ENCODE measurements at regions of chr1 and their contacts with region 1.

Region 1: DNA sequence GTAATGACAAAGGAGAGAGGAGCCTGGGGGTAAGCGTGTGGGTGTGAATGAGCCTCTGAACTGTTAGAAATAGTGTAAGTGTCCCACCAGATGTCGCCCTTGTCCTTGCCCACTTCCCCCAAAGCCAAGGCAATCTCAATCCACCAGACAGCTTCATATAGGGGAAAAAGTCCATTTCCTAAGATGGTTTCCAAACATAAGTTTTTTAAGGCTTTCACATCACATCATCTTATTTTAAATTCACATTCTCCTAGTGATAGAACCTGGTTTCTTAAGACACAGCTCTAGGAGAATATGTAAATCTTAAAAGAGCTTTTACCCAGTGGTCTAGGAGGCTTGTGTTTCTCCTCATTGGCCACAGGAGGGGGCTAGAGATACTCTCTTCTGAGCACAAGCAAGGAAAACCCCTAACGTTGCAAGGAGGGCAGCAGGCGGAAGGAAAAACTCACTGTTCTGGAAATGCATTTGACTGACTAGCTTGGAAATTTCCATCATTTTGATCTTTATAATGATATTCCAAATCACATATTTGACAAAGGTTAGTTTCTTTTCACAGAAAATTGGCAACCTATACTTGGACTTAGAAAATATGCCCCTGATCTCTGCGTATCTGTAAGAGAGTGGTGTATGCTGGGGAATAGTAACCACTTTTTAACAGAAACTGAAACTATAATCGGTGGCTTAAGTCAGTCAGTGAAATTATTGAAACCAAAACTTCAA is 51.9 kb upstream of the LPAR3 start:
- DNase-seq: peak; percentile 67
- H3K4me3 ChIP-seq: peak overlapping the region; percentile 8 to 44 (median 22)
- H3K27ac ChIP-seq: peak overlapping the region; percentile 68 to 82 (median 72)
- H3K4me1 ChIP-seq: peaks cover 0 to 9% (median 3%) of the 10 kb centered on the region in 4 donors
- H3K27me3 ChIP-seq: no peaks in the 10 kb centered on the region
- CTCF ChIP-seq: peak; percentile 88 to 97 (median 96)
- EP300 ChIP-seq: no peak
- POLR2A ChIP-seq: no peak

Region 2: GRCh38 chr1:84143796-84144565 is 800.9 kb before region 1 on chr1 and contains the start of gene PRKACB:
- in situ Hi-C with region 1: loop called in 1 of 4 experiments (anchors 25 kb)
- intact Hi-C with region 1: no loop called
- DNase-seq: no peak
- H3K4me3 ChIP-seq: peak within 1 kb of the TSS in 3 of 4 donors; percentile 20 to 45 (median 30)
- H3K27ac ChIP-seq: peak within 1 kb of the TSS; percentile 71 to 85 (median 80)
- H3K4me1 ChIP-seq: peaks cover 0 to 41% (median 4%) of the 10 kb centered on the region in 4 donors
- H3K27me3 ChIP-seq: no peaks in the 10 kb centered on the region
- CTCF ChIP-seq: no peak
- EP300 ChIP-seq: no peak
- POLR2A ChIP-seq: peak; percentile 76
- total RNA-seq, gene PRKACB: 34.6 to 115 (median 79.2) TPM

Region 3: DNA sequence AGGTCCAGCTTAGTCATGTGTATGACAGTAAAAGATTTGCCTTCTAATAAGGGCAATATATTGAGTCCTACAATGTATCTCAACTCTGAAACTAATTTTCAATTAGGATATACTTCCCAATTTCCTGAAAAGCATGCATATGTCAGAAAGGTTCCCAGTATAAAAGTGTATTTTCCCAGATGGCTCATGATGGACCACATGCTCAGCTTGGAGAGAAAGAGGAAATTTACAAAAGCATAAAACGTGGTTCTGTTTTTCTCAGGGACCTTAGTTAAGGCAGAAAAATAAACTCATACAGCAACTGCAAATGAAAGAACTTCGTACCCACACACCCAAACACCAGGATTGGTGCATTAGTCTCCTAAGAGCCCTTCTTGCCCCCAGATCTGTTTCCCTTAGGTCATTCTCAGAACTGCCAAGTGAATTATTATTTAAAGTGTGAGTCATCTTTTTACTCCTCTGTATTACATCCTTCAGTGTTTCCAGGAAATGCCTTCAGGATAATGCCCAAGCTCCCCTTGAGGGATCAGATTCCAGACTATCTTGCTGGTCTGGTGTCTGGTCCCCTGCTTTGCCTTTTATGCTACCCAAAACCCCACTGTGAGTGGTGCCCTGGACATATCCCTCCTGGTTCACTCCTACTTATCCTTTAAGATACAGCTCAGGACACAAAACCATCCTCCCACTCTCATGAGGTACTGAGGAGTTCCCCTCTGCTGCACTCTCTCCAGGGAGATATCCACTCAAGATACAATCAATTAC is 312.1 kb before region 1 on chr1:
- in situ Hi-C with region 1: loop called in 1 of 4 experiments (anchors 25 kb)
- intact Hi-C with region 1: no loop called
- DNase-seq: peak; percentile 10
- H3K4me3 ChIP-seq: no peak overlapping the region
- H3K27ac ChIP-seq: peak overlapping the region in 3 of 4 donors; percentile 51 to 60 (median 60)
- H3K4me1 ChIP-seq: peaks cover 3 to 22% (median 9%) of the 10 kb centered on the region in 4 donors
- H3K27me3 ChIP-seq: no peaks in the 10 kb centered on the region
- CTCF ChIP-seq: peak in 1 of 5 experiments; percentile 20
- EP300 ChIP-seq: no peak
- POLR2A ChIP-seq: no peak

Region 4: DNA sequence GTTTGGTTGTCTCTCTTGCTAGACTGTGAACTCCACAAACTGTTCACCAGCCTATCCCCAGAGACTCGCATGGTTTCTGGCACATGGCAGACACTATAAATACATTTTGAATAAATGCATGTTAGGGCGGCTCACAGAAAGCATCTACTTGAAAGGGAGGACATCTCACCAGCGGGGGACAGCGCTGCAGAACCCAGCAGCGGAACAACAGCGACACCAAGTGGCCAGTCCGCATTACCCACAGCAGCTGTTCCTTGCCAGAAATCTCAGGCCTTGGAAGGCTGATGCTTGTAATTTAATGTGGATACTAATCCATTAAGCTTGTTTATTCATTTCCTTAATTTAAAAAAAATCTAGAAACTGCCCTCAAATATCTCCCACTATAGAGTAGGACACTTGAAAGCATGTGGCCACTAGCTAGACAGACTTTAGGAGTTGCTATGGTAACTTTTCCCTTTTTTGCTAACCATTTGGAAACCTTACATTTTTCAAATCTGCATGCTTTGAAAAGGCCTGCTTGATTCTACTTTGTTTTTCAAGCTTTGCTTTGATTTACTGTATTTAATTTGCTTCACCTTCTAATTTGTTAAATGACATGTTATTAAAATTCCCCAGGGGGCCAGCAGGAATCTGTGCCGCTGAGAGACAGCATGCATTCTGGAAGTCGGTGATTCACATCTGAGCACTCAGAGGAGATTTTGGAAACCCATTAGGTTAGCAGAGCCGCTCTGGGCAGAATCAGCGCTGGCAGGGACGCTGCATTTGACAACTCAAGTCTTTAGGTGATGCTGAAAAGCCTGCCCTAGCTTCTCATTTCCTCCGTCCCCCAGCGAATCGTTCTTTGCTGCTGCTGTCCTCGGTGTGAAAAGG is 191.2 kb before region 1 on chr1:
- in situ Hi-C with region 1: loop called in 1 of 4 experiments (anchors 25 kb)
- intact Hi-C with region 1: no loop called
- DNase-seq: peak; percentile 76
- H3K4me3 ChIP-seq: no peak overlapping the region
- H3K27ac ChIP-seq: no peak overlapping the region
- H3K4me1 ChIP-seq: no peaks in the 10 kb centered on the region
- H3K27me3 ChIP-seq: no peaks in the 10 kb centered on the region
- CTCF ChIP-seq: peak; percentile 91 to 96 (median 95)
- EP300 ChIP-seq: no peak
- POLR2A ChIP-seq: no peak

Region 5: GRCh38 chr1:85027242-85027983 is 82.5 kb after region 1 on chr1:
- in situ Hi-C with region 1: loop called in 1 of 4 experiments (anchors 5 kb)
- intact Hi-C with region 1: no loop called
- DNase-seq: no peak
- H3K4me3 ChIP-seq: no peak overlapping the region
- H3K27ac ChIP-seq: no peak overlapping the region
- H3K4me1 ChIP-seq: no peaks in the 10 kb centered on the region
- H3K27me3 ChIP-seq: no peaks in the 10 kb centered on the region
- CTCF ChIP-seq: peak in 3 of 5 experiments; percentile 17 to 24 (median 18)
- EP300 ChIP-seq: no peak
- POLR2A ChIP-seq: no peak

Region 6: DNA sequence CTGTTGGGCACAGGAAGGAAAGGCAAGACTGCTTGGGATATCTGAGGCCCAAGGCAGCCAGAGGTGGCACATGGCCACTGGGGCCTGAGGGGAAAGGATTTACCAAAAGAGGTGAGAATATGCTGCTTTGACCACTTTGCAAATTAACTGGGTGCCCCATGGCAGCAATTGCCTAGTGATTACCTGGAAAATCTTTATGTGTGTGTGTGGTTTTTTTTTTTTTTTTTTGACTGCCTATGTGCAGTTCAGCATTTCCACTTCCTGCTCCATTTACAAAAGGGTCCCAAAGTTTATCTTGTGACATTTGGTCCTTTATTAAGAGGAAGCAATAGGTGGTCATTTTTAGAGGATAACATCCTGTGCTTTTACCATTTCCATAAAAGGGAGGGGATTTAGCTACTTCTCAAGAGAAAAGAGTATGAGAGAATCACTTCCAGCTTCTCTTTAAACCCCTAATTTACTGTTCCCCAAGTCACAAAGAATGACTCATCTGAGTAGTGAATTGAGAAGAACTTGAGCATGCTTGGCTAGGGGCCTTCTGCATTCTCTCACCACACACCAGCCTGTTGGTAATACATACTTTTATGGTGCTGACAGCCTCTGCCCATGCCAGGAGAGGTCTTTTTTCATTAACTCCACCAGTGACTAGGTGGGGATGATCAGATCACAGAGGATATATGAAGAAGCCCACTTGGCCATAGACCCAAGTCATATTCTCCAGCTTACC is 203.8 kb after region 1 on chr1:
- in situ Hi-C with region 1: no loop called
- intact Hi-C with region 1: no loop called
- DNase-seq: no peak
- H3K4me3 ChIP-seq: no peak overlapping the region
- H3K27ac ChIP-seq: no peak overlapping the region
- H3K4me1 ChIP-seq: peaks cover 0 to 9% (median 0%) of the 10 kb centered on the region in 4 donors
- H3K27me3 ChIP-seq: no peaks in the 10 kb centered on the region
- CTCF ChIP-seq: no peak
- EP300 ChIP-seq: no peak
- POLR2A ChIP-seq: no peak

Region 7: DNA sequence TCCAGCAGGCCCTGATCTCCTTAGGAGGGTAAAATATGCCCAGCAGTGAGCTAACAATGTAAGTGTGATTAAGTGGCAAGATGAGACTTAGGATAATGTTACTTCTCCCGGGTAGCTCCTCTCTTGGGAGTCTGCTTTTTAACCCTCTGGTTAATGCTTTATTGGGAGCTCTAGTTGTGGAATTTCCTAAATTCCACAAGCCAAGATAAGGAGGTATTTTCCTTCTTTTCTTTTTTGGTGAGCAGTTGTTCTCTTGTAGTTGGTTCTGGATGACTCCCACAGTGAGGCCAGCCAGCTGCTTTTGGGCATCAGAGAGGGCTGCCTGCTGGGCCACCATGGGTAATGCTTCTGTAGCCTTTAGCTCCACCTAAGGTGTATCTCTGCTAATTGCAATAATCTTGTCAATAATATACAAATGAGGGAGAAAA is 295.3 kb after region 1 on chr1:
- in situ Hi-C with region 1: loop called (anchors 5 to 25 kb)
- intact Hi-C with region 1: no loop called
- DNase-seq: no peak
- H3K4me3 ChIP-seq: no peak overlapping the region
- H3K27ac ChIP-seq: peak overlapping the region in 3 of 4 donors; percentile 37 to 67 (median 50)
- H3K4me1 ChIP-seq: peaks cover 0 to 25% (median 4%) of the 10 kb centered on the region in 4 donors
- H3K27me3 ChIP-seq: no peaks in the 10 kb centered on the region
- CTCF ChIP-seq: no peak
- EP300 ChIP-seq: no peak
- POLR2A ChIP-seq: no peak

Region 8: DNA sequence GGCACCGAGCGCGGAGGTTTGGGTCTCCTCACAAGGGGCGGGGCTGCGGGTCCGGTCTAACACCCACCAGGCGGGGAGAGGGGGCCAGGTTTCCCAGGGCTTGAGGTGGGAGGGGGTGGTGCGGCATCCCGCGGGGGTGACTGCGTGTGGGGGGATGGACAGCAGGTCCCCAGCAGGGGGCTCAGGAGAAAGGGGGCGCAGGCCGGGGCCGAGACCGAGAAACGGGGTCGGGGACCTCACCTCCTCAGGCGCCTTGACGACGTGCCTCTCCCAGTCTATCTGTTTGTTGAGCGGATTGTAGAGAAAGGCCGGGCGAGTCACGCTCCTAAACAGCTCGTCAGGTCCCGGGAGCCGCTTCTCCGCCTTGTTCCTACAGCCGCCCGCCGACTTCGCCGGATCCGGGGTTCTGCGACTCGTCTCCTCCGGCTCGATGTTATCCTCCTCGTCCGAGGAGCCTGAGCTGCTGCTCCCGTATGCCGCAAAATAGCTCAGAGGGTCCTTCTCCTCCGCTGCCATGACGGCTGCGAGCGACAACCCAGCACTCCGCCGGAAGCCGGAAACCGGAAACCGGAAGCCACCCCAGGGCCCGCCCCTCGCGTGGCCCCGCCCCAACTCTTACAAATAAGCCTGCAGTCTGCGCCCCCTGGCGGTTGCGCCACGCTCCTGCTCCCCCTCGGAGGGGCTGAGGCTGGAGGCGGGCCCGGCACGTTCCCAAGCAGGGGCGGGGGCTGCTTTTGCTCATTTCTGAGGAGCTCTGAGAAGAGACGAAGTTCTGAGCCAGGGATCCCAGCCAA is 314.4 kb after region 1 on chr1 and contains the start of gene C1orf52:
- in situ Hi-C with region 1: no loop called
- intact Hi-C with region 1: loop called (anchors 5 kb)
- DNase-seq: peak; percentile 95
- H3K4me3 ChIP-seq: peak within 1 kb of the TSS; percentile 64 to 94 (median 81)
- H3K27ac ChIP-seq: peak within 1 kb of the TSS; percentile 80 to 91 (median 88)
- H3K4me1 ChIP-seq: peaks cover 9 to 42% (median 28%) of the 10 kb centered on the region in 4 donors
- H3K27me3 ChIP-seq: no peaks in the 10 kb centered on the region
- CTCF ChIP-seq: peak; percentile 97 to 100 (median 99)
- EP300 ChIP-seq: no peak
- POLR2A ChIP-seq: peak; percentile 82
- total RNA-seq, gene C1orf52: 7.4 to 42.6 (median 14.9) TPM

Region 9: GRCh38 chr1:85448358-85448757 is 503.4 kb after region 1 on chr1:
- in situ Hi-C with region 1: no loop called
- intact Hi-C with region 1: no loop called
- DNase-seq: no peak
- H3K4me3 ChIP-seq: no peak overlapping the region
- H3K27ac ChIP-seq: peak overlapping the region in 1 of 4 donors; percentile 53
- H3K4me1 ChIP-seq: peaks cover 0 to 13% (median 7%) of the 10 kb centered on the region in 4 donors
- H3K27me3 ChIP-seq: no peaks in the 10 kb centered on the region
- CTCF ChIP-seq: no peak
- EP300 ChIP-seq: no peak
- POLR2A ChIP-seq: no peak